Activated B cell treated with CpG ODN at 0.5 μM for 24 hours (primary cell): ENCODE measurements at regions of chr9 and their contacts with region 1.

Region 1: GRCh38 chr9:112809351-112809848 is 58.8 kb downstream of the SNX30 start:
- DNase-seq: no peak
- ATAC-seq: peak; percentile 93
- H3K4me3 Mint-ChIP-seq: no peak overlapping the region
- H3K27ac Mint-ChIP-seq: no peak overlapping the region
- H3K4me1 Mint-ChIP-seq: peaks cover 23% of the 10 kb centered on the region
- H3K27me3 Mint-ChIP-seq: peaks cover 10% of the 10 kb centered on the region
- CTCF ChIP-seq: no peak

Region 2: GRCh38 chr9:112486221-112487007 is 323.0 kb before region 1 on chr9 and contains the start of gene KIAA1958:
- CTCF ChIA-PET with region 1: no interaction called
- POLR2A ChIA-PET with region 1: interaction called, 4 read pairs
- intact Hi-C with region 1: loop called (anchors 1 kb)
- DNase-seq: peak; percentile 75
- ATAC-seq: peak; percentile 89
- H3K4me3 Mint-ChIP-seq: peak within 1 kb of the TSS; percentile 97
- H3K27ac Mint-ChIP-seq: peak within 1 kb of the TSS; percentile 89
- H3K4me1 Mint-ChIP-seq: peaks cover 19% of the 10 kb centered on the region
- H3K27me3 Mint-ChIP-seq: no peaks in the 10 kb centered on the region
- CTCF ChIP-seq: no peak
- total RNA-seq, gene KIAA1958: 5.8 and 7.4 TPM in 2 replicates

Region 3: GRCh38 chr9:112786834-112787492 is 22.4 kb before region 1 on chr9:
- CTCF ChIA-PET with region 1: no interaction called
- POLR2A ChIA-PET with region 1: no interaction called
- intact Hi-C with region 1: loop called (anchors 1 kb)
- DNase-seq: no peak
- ATAC-seq: peak; percentile 82
- H3K4me3 Mint-ChIP-seq: peak overlapping the region; percentile 66
- H3K27ac Mint-ChIP-seq: peak overlapping the region; percentile 77
- H3K4me1 Mint-ChIP-seq: peaks cover 35% of the 10 kb centered on the region
- H3K27me3 Mint-ChIP-seq: no peaks in the 10 kb centered on the region
- CTCF ChIP-seq: no peak